ACHN (cell line): ENCODE measurements at regions of chrX and their contacts with region 1.

Region 1: DNA sequence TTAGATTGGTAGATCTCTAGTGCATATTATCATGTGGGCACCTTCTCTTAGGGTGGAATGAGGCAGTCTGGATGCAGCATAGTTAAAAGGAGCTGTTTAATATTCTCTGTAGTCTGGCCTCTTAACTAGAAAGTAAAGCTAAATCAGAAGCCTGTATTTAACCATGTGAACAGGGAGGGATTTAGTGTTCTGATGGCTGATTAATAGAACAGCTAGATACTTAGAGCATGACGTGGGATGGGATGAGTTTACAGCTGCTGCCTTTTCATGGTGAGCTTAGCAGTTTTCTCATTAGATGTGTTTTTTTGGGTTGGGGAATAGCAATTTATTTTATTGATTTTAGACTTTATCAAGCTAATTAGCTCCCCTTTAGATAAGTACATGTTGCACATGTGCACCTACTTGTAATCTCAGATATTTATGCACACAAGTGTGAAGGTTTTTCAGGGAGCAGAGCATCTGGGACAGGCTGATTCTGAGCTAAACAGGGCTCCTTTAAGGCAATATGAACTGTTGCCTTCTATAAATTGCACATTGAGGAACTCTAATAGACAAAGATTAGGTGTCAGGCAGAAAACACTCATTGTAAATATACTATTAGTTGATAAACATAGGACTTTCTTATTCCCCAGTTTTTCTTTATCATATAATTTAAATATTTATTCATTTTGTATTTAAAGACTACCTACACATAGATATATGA is 34.1 kb downstream of the YIPF6 start:
- DNase-seq: no peak

Region 2: DNA sequence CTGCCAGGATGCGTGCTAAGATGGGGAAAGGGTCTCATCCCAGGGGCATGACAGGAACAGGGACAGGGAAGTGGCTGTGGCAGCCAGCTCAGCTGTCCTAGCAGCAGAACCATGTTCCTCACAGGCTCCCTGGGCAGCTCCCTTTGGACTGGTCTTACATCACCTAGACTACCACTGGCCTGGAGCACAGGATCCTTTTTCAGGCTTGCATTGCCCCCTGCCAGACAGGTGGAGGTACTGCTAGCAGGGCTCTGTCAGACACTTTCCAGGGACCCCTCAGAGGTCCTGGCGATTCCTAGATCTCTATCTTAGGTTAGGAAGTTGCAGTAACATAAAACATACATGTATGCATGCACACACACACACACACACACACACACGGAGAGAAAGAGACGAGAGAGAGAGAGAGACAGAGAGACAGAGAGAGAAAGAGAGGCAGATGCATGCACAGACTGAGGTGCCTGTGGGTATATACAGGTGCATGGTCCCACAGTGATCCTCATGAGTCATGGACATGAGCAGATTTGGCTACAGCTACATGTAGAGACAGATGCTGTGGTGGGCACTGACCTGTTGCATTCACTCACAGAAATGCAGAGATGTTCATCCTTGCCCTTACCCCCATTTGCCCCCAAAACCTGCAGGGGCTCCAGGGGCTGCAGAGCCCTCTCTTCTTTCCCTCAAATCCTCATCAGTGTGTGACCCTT is 178.0 kb after region 1 on chrX:
- in situ Hi-C with region 1: loop called (anchors 25 kb)
- DNase-seq: peak; percentile 38